HEK293 (cell line): ENCODE measurements at regions of chr9 and their contacts with region 1.

Region 1: GRCh38 chr9:124420991-124421543 is 5.8 kb upstream of the PSMB7 start:
- H3K4me3 ChIP-seq: no peak overlapping the region
- H3K27ac ChIP-seq: no peak overlapping the region
- H3K4me1 ChIP-seq: no peaks in the 10 kb centered on the region
- CTCF ChIP-seq: no peak

Region 2: DNA sequence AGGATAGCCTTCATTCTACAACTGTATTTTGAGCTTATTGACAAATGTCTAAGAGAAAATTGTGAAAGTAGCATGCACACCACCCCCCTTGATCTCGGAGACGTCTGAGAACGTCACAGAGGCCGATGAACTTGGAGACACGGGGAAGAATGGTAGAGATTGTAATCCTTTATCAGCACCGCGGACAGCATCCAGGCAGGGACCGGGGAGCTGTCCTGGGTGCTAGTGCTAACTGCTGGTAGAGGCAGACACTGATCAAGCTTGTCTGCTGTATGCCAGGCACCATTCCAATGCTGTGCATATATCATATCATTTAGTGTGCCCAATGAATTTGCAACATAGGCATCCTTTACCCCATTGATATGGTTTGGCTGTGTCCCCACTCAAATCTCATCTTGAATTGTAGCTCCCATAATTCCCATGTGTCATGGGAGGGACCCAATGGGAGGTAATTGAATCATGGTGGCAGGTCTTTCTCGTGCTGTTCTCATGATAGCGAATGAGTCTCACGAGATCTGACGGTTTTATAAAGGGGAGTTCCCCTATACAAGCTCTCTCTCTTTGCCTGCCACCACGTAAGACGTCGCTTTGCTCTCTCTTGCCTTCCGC is 310.7 kb before region 1 on chr9:
- CTCF ChIA-PET with region 1: no interaction called
- POLR2A ChIA-PET with region 1: no interaction called
- H3K4me3 ChIP-seq: no peak overlapping the region
- H3K27ac ChIP-seq: no peak overlapping the region
- H3K4me1 ChIP-seq: no peaks in the 10 kb centered on the region
- CTCF ChIP-seq: no peak

Region 3: GRCh38 chr9:124436320-124436719 is 15.3 kb after region 1 on chr9:
- CTCF ChIA-PET with region 1: interaction called, 21 read pairs
- POLR2A ChIA-PET with region 1: no interaction called
- H3K4me3 ChIP-seq: no peak overlapping the region
- H3K27ac ChIP-seq: no peak overlapping the region
- H3K4me1 ChIP-seq: no peaks in the 10 kb centered on the region
- CTCF ChIP-seq: no peak

Region 4: GRCh38 chr9:124450241-124450924 is 29.3 kb after region 1 on chr9 and contains the start of gene ADGRD2:
- CTCF ChIA-PET with region 1: interaction called, 14 read pairs
- POLR2A ChIA-PET with region 1: no interaction called
- H3K4me3 ChIP-seq: no peak within 1 kb of the TSS; the same call in 1 of the 2 replicates
- H3K27ac ChIP-seq: no peak within 1 kb of the TSS
- H3K4me1 ChIP-seq: no peaks in the 10 kb centered on the region; the same call in 1 of the 2 replicates
- CTCF ChIP-seq: no peak

Region 5: GRCh38 chr9:124480621-124480981 is 59.5 kb after region 1 on chr9:
- CTCF ChIA-PET with region 1: interaction called, 27 read pairs
- POLR2A ChIA-PET with region 1: interaction called, 3 read pairs
- H3K4me3 ChIP-seq: no peak overlapping the region
- H3K27ac ChIP-seq: no peak overlapping the region
- H3K4me1 ChIP-seq: no peaks in the 10 kb centered on the region
- CTCF ChIP-seq: peak; percentile 63

Region 6: GRCh38 chr9:124527781-124528180 is 106.7 kb after region 1 on chr9:
- CTCF ChIA-PET with region 1: interaction called, 12 read pairs
- POLR2A ChIA-PET with region 1: no interaction called
- H3K4me3 ChIP-seq: no peak overlapping the region
- H3K27ac ChIP-seq: no peak overlapping the region
- H3K4me1 ChIP-seq: no peaks in the 10 kb centered on the region
- CTCF ChIP-seq: no peak

Region 7: DNA sequence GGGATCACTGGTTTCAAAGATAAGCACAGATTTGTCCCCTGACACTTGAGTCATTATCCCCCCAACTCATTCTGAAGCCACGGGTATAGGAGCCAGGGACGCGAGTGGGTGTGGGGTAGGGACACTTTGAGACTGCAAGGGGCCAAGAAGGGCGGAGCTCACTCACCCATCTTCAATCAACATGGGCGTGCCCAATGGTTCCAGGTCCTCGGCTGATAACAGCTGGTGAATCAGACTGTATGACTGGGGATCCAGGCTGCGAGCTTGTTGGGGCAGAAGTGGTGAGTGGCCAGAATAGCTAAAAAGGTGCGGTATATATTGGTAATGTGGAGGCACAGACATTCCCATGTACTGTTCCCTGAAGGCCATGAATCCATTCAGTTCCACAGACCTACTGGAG is 116.9 kb after region 1 on chr9:
- CTCF ChIA-PET with region 1: interaction called, 116 read pairs
- POLR2A ChIA-PET with region 1: no interaction called
- H3K4me3 ChIP-seq: no peak overlapping the region
- H3K27ac ChIP-seq: no peak overlapping the region
- H3K4me1 ChIP-seq: no peaks in the 10 kb centered on the region
- CTCF ChIP-seq: no peak